ENCODE measurements at regions of chr4 and their contacts with region 1.

Region 1: GRCh38 chr4:150970685-150971151 is 44.4 kb downstream of the LRBA start:
- DNase-seq: peak; percentile 49
- H3K4me3 Mint-ChIP-seq: no peak overlapping the region
- H3K27ac Mint-ChIP-seq: peak overlapping the region; percentile 71
- H3K4me1 Mint-ChIP-seq: peaks cover 27% of the 10 kb centered on the region
- H3K27me3 Mint-ChIP-seq: no peaks in the 10 kb centered on the region

Region 2: DNA sequence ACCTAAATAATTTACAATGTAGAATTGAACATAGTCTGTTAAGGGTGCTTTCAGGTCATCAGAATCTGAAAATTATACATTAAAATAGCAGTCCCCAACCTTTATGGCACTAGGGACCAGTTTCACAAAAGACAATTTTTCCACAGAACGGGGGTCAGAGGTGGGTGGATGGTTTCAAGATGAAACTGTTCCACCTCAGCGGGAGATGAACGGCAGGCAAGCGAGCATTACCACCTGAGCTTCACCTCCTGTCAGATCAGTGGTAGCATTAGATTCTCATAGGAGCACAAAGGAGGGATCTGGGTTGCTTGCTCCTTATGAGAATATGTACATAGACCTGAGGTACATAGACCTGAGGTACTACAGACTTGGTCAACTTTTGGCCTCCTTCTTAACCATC is 15.4 kb after region 1 on chr4:
- intact Hi-C with region 1: loop called (anchors 2 kb)
- DNase-seq: peak; percentile 54
- H3K4me3 Mint-ChIP-seq: no peak overlapping the region
- H3K27ac Mint-ChIP-seq: peak overlapping the region; percentile 68
- H3K4me1 Mint-ChIP-seq: peaks cover 20% of the 10 kb centered on the region
- H3K27me3 Mint-ChIP-seq: no peaks in the 10 kb centered on the region

Region 3: DNA sequence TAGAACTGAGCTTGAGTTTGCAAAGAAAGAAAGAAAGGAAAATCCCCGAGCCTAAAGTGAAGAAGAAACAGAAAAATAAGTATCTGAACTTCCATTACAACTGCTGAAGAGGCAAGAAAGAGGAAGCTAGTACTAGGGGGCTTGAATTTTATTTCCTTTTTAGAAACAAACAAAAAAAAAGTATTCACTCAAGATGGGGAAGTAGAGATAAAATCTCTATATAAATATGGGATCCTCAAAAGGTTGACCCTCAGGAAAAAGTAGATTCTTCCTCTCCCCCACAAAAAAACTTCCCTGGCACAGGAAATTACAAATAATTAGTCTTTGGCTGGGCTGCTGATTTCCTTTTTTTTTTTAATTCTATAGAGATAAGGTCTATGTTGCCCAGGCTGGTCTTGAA is 28.4 kb after region 1 on chr4:
- intact Hi-C with region 1: no loop called
- DNase-seq: no peak
- H3K4me3 Mint-ChIP-seq: no peak overlapping the region
- H3K27ac Mint-ChIP-seq: no peak overlapping the region
- H3K4me1 Mint-ChIP-seq: peaks cover 15% of the 10 kb centered on the region
- H3K27me3 Mint-ChIP-seq: no peaks in the 10 kb centered on the region

Region 4: GRCh38 chr4:151099229-151099975 is 128.7 kb after region 1 on chr4 and contains the start of gene RPS3A:
- intact Hi-C with region 1: loop called (anchors 5 kb)
- DNase-seq: peak; percentile 100
- H3K4me3 Mint-ChIP-seq: peak within 1 kb of the TSS; percentile 98
- H3K27ac Mint-ChIP-seq: peak within 1 kb of the TSS; percentile 98
- H3K4me1 Mint-ChIP-seq: peaks cover 48% of the 10 kb centered on the region
- H3K27me3 Mint-ChIP-seq: peaks cover 4% of the 10 kb centered on the region
- total RNA-seq, gene RPS3A: 1,850 and 1,855 TPM in 2 replicates

Region 5: GRCh38 chr4:151117371-151117962 is 146.7 kb after region 1 on chr4:
- intact Hi-C with region 1: no loop called
- DNase-seq: peak; percentile 87
- H3K4me3 Mint-ChIP-seq: no peak overlapping the region
- H3K27ac Mint-ChIP-seq: no peak overlapping the region
- H3K4me1 Mint-ChIP-seq: peaks cover 5% of the 10 kb centered on the region
- H3K27me3 Mint-ChIP-seq: no peaks in the 10 kb centered on the region